Ascending aorta (tissue), 2 donors: ENCODE measurements at regions of chr10 and their contacts with region 1.

Region 1: GRCh38 chr10:98134431-98135221 is at the start of gene R3HCC1L:
- DNase-seq: peak; percentile 60 to 95
- H3K4me3 ChIP-seq: peak within 1 kb of the TSS; percentile 69 to 92
- H3K27ac ChIP-seq: peak within 1 kb of the TSS; percentile 81 to 86
- H3K4me1 ChIP-seq: peaks cover 0 to 6% of the 10 kb centered on the region in 2 donors
- H3K27me3 ChIP-seq: no peaks in the 10 kb centered on the region
- CTCF ChIP-seq: peak in 1 of 3 experiments; percentile 4
- total RNA-seq, gene R3HCC1L: 3.1 TPM

Region 2: GRCh38 chr10:97714048-97714371 is 420.6 kb before region 1 on chr10:
- intact Hi-C with region 1: loop called (anchors 10 kb)
- DNase-seq: peak; percentile 47 to 82
- H3K4me3 ChIP-seq: peak overlapping the region; percentile 67 to 78
- H3K27ac ChIP-seq: peak overlapping the region; percentile 98 to 100
- H3K4me1 ChIP-seq: peaks cover 35 to 60% of the 10 kb centered on the region in 2 donors
- H3K27me3 ChIP-seq: no peaks in the 10 kb centered on the region
- CTCF ChIP-seq: peak in 1 of 3 experiments; percentile 18